K562 (cell line): ENCODE measurements at regions of chr7 and their contacts with region 1.

Region 1: DNA sequence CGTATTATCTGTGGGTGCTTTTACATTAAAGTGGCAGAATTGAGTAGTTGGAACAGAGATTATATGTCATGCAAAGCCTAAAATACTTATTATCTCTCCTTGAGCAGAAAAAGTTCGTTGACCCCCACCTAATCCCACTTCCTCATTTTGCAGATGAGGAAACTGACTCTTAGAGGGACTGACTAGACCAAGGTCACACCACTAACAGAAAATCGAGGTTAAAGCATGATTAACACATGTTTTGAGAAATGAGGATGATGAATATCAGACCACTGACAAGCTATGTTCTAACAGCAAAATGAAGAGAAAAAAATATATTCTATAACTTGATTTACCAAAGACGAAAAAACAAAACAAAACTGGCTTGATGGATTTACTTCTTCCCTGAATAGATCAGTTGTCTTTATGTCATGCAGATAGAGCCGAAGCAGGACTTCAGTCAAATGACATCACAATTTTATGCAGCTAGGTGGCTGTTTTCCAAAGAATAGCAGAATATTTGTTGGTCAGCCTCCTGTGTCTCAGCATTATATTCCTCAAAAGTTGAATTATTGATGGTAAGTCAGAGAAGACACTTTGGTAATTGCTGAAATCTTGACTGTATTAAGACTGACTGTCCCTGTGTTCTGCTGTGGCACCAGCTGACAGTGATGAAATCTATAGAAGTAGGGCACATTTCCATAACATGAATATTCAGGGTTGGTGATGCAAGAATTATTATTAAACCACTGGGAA is 24.2 kb upstream of the SMIM30 start:
- DNase-seq: peak in 2 of 4 experiments; percentile 70 to 85
- ATAC-seq: peak; percentile 79
- H3K4me3 ChIP-seq: no peak overlapping the region
- H3K27ac ChIP-seq: peak overlapping the region; percentile 69
- H3K4me1 ChIP-seq: peaks cover 11 to 54% of the 10 kb centered on the region in 2 experiments
- H3K27me3 ChIP-seq: no peaks in the 10 kb centered on the region
- CTCF ChIP-seq: no peak
- EP300 ChIP-seq: peak; percentile 98
- POLR2A ChIP-seq: no peak
- RAD21 ChIP-seq: no peak; a peak in 1 of 4 replicates

Region 2: GRCh38 chr7:112939574-112940314 is 202.8 kb before region 1 on chr7:
- CTCF ChIA-PET with region 1: no interaction called
- POLR2A ChIA-PET with region 1: interaction called, 3 read pairs
- in situ Hi-C with region 1: no loop called
- intact Hi-C with region 1: loop called (anchors 5 kb)
- DNase-seq: peak; percentile 100
- ATAC-seq: peak; percentile 99
- H3K4me3 ChIP-seq: peak overlapping the region; percentile 81
- H3K27ac ChIP-seq: peak overlapping the region; percentile 80
- H3K4me1 ChIP-seq: peaks cover 3 to 7% of the 10 kb centered on the region in 2 experiments; a peak in 3 of 5 replicates
- H3K27me3 ChIP-seq: no peaks in the 10 kb centered on the region
- CTCF ChIP-seq: no peak
- EP300 ChIP-seq: no peak
- POLR2A ChIP-seq: peak; percentile 90; the same call in 1 of the 2 replicates
- RAD21 ChIP-seq: peak in 1 of 2 experiments; percentile 29; a peak in 1 of 4 replicates

Region 3: GRCh38 chr7:113118074-113118959 is 24.2 kb before region 1 on chr7 and contains the start of gene SMIM30:
- CTCF ChIA-PET with region 1: no interaction called
- POLR2A ChIA-PET with region 1: no interaction called
- in situ Hi-C with region 1: no loop called
- intact Hi-C with region 1: loop called (anchors 1 kb)
- DNase-seq: peak; percentile 89 to 99 (median 93)
- ATAC-seq: peak; percentile 99
- H3K4me3 ChIP-seq: peak within 1 kb of the TSS; percentile 59
- H3K27ac ChIP-seq: peak within 1 kb of the TSS; percentile 75
- H3K4me1 ChIP-seq: peaks cover 0 to 23% of the 10 kb centered on the region in 2 experiments; a peak in 3 of 5 replicates
- H3K27me3 ChIP-seq: no peaks in the 10 kb centered on the region
- CTCF ChIP-seq: peak in 2 of 3 experiments; percentile 10 to 18; a peak in 1 of 6 replicates
- EP300 ChIP-seq: peak; percentile 22; the same call in 1 of the 2 replicates
- POLR2A ChIP-seq: peak; percentile 96
- RAD21 ChIP-seq: no peak; a peak in 1 of 4 replicates
- polyA plus RNA-seq, gene SMIM30: 675 to 891 TPM

Region 4: GRCh38 chr7:113209449-113210203 is 67.1 kb after region 1 on chr7:
- CTCF ChIA-PET with region 1: no interaction called
- POLR2A ChIA-PET with region 1: no interaction called
- in situ Hi-C with region 1: no loop called
- intact Hi-C with region 1: no loop called
- DNase-seq: no peak
- ATAC-seq: no peak
- H3K4me3 ChIP-seq: no peak overlapping the region
- H3K27ac ChIP-seq: no peak overlapping the region
- H3K4me1 ChIP-seq: no peaks in the 10 kb centered on the region; a peak in 1 of 5 replicates
- H3K27me3 ChIP-seq: no peaks in the 10 kb centered on the region
- CTCF ChIP-seq: no peak
- EP300 ChIP-seq: no peak
- POLR2A ChIP-seq: no peak
- RAD21 ChIP-seq: no peak